Gastrocnemius medialis (tissue), 4 donors: ENCODE measurements at regions of chr9 and their contacts with region 1.

Region 1: DNA sequence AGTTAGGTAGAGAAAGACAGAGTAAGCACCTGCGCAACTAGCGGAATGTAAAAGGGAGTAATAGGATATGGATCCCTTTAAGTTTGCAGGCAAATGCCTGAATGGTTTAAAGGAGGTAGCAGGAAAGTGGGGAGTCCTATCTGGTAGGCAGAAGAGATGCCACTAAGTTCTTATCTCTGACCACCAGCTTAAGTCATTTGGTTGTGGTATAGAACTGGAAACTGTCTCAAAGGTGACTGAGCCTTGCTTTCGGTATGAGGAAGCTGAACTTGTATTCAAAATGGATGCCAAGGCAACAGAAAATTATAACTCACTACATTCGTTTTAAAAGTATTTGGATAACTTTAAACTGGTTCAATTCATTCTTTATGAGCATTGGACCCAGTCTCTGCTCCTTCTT is 475.6 kb downstream of the DMRTA1 start:
- DNase-seq: no peak
- ATAC-seq: no peak
- H3K4me3 ChIP-seq: no peak overlapping the region
- H3K27ac ChIP-seq: no peak overlapping the region
- H3K4me1 ChIP-seq: no peaks in the 10 kb centered on the region
- H3K27me3 ChIP-seq: no peaks in the 10 kb centered on the region
- CTCF ChIP-seq: no peak
- POLR2A ChIP-seq: no peak

Region 2: DNA sequence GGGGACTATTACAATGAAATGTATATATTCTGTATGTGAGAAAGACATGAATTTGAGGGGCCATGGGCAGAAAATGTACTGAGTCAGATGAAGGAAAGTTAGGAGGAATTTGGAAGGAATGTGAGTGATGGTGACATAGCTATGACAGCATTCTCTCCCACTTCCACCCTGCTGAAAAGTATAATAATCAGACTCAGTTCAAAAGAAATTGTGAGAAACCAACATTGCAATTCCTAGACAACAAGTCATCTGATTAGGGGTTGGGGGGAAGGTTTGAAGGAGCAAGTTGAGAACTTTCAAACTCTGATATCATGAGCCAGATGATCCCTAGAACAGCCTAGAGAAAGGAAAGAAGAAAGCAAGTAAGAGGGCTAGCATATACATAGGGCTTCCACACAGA is 105.0 kb before region 1 on chr9:
- in situ Hi-C with region 1: no loop called
- intact Hi-C with region 1: no loop called
- DNase-seq: no peak
- ATAC-seq: no peak
- H3K4me3 ChIP-seq: no peak overlapping the region
- H3K27ac ChIP-seq: no peak overlapping the region
- H3K4me1 ChIP-seq: no peaks in the 10 kb centered on the region
- H3K27me3 ChIP-seq: no peaks in the 10 kb centered on the region
- CTCF ChIP-seq: no peak
- POLR2A ChIP-seq: no peak

Region 3: GRCh38 chr9:22990349-22990748 is 68.1 kb after region 1 on chr9:
- in situ Hi-C with region 1: no loop called
- intact Hi-C with region 1: no loop called
- DNase-seq: no peak
- ATAC-seq: no peak
- H3K4me3 ChIP-seq: no peak overlapping the region
- H3K27ac ChIP-seq: no peak overlapping the region
- H3K4me1 ChIP-seq: no peaks in the 10 kb centered on the region
- H3K27me3 ChIP-seq: no peaks in the 10 kb centered on the region
- CTCF ChIP-seq: no peak
- POLR2A ChIP-seq: no peak

Region 4: DNA sequence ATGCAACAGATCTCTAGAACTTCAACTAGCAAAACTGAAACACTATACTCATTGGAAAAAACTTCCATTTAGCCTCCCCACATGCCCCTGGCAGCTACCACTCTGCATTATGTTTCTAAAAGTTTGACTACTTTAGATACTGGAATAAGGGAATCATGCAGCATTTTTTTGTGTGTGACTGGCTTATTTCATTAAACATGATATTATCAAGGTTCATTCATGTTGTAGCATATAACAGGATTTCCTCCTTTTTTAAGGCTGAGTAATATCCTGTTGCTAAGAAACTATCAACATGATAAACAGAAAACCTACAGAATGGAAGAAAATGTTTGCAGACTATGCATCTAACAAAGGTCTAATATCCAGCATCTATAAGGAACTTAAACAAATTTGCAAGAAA is 122.3 kb after region 1 on chr9:
- in situ Hi-C with region 1: loop called in 2 of 4 experiments (anchors 25 kb)
- intact Hi-C with region 1: no loop called
- DNase-seq: no peak
- ATAC-seq: no peak
- H3K4me3 ChIP-seq: no peak overlapping the region
- H3K27ac ChIP-seq: no peak overlapping the region
- H3K4me1 ChIP-seq: no peaks in the 10 kb centered on the region
- H3K27me3 ChIP-seq: no peaks in the 10 kb centered on the region
- CTCF ChIP-seq: no peak
- POLR2A ChIP-seq: no peak